ENCODE measurements at regions of chr18 and their contacts with region 1.

Region 1: DNA sequence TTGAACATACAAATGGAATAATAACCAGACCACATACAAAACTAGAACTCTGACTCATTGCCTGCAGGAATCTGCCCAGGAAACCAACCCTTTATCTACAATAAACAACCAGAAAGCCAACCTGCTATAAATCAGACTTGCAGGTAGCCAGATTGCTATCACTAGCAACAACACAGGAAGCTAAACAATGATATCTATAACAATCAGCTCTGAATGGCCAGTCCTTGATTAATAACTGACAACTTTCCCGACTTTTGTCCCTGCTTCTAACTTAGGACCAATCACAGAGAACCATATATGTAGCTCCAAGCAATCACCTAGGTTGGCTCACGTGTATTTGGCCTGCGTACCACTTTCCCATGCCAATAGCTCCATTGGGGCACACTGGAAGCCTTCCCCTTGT is 470.8 kb downstream of the RIT2 start:
- DNase-seq: peak; percentile 89
- H3K4me3 ChIP-seq: no peak overlapping the region
- H3K27ac ChIP-seq: peak overlapping the region; percentile 84
- H3K4me1 ChIP-seq: peaks cover 43% of the 10 kb centered on the region
- H3K27me3 ChIP-seq: no peaks in the 10 kb centered on the region
- CTCF ChIP-seq: no peak
- POLR2A ChIP-seq: peak; percentile 92

Region 2: GRCh38 chr18:42614619-42615293 is 30.0 kb before region 1 on chr18:
- CTCF ChIA-PET with region 1: interaction called, 5 read pairs
- POLR2A ChIA-PET with region 1: interaction called, 4 read pairs
- dilution Hi-C with region 1: no loop called
- intact Hi-C with region 1: loop called (anchors 1 kb)
- DNase-seq: peak; percentile 74
- H3K4me3 ChIP-seq: no peak overlapping the region
- H3K27ac ChIP-seq: peak overlapping the region; percentile 60
- H3K4me1 ChIP-seq: peaks cover 10% of the 10 kb centered on the region
- H3K27me3 ChIP-seq: no peaks in the 10 kb centered on the region
- CTCF ChIP-seq: no peak
- POLR2A ChIP-seq: no peak

Region 3: GRCh38 chr18:42931491-42931890 is 286.8 kb after region 1 on chr18:
- CTCF ChIA-PET with region 1: interaction called, 3 read pairs
- POLR2A ChIA-PET with region 1: no interaction called
- dilution Hi-C with region 1: no loop called
- intact Hi-C with region 1: loop called (anchors 2 kb)
- DNase-seq: peak; percentile 92
- H3K4me3 ChIP-seq: peak overlapping the region in 1 of 3 experiments; percentile 19
- H3K27ac ChIP-seq: peak overlapping the region; percentile 84
- H3K4me1 ChIP-seq: peaks cover 34% of the 10 kb centered on the region
- H3K27me3 ChIP-seq: no peaks in the 10 kb centered on the region
- CTCF ChIP-seq: no peak
- POLR2A ChIP-seq: peak; percentile 60